A549 (cell line): ENCODE measurements at regions of chr2 and their contacts with region 1.

Region 1: DNA sequence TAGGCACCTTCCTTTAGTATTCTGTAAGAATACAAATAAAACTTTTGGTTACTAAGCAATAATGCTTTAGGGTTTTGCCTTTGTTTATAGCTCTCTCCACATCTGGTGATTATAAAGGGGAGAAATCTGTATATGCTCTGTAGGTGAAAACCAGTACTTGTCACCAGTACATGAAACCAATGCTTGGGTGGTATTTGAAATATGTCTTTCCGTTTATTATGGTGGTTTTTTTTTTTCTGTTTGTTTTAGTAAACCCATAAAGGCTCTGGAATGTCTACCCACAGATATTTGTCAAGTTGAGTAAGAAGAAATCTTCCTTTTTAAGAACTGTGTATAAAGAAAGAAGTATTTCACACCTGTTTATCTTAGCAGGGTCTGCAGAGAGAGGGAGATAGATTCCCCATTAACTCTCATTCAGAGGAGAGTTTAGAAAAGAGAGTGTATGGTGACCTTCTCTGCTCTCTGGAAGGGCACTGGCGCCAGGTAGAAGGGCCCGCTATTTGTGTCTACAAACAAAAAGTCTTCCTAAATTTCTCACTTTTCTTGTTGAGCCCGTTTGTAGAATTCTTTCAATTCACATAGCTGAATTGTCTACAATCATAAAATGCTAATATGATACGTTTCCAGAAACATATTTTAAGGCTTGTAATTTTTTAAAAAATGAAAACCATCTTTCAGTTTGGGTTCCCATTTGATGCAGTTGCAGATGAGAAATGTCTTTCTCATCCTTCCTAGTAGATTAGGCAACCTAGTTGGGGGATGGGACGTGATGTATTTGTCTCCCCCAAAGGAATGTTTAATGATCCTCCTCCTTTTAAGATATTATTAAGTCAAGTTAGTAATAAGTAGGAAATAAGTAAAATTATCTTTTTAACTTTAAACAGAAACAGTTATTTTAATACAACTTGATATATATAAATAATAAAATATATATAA is 33.9 kb downstream of the MAP3K20 start:
- DNase-seq: peak in 1 of 2 experiments; percentile 77
- ATAC-seq: peak; percentile 82 to 89
- H3K4me3 ChIP-seq: peak overlapping the region; percentile 30; the same call in 2 of the 3 replicates
- H3K27ac ChIP-seq: peak overlapping the region; percentile 83 to 86
- H3K4me1 ChIP-seq: peaks cover 44% of the 10 kb centered on the region
- CTCF ChIP-seq: no peak
- EP300 ChIP-seq: peak; percentile 40 to 59; a peak in 4 of 5 replicates
- POLR2A ChIP-seq: no peak
- RAD21 ChIP-seq: peak in 1 of 2 experiments; percentile 29; a peak in 1 of 5 replicates

Region 2: DNA sequence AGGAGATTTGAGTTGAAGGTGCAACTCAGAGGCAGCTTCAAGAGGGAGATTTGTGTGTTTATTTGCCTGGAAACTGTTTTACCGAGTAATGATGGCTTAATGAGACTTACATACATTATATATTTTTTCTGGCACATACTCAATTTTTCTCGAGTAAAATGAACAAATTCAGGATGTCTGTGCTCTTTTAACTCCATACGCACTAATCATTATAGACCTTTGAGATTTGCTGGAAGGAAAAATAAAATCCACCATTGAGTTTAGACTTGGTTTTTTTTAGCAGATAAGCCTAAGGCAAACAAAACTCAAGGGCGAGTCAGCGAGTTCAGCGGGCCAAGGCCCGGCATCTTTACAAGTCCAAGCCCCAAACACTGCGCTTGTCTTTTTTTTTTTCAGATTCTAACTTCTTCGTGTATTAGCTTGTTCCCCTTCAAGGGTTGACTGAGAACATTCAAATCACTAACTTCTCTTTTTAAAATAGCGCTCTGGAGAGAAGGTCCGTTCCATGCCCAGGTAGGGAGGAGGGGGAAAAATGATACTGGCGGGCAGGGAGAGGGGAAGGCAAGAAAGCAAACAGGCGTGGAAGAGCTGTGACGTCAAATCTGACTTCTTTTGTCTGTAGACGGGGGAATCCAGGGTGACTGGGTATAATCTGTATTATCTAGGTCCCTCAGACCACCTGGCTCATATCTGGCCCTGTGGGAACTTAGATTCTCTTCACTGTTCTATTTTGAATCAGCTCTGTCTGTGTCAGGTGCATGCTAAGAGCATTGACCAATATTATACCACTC is 106.6 kb before region 1 on chr2:
- CTCF ChIA-PET with region 1: no interaction called
- POLR2A ChIA-PET with region 1: no interaction called
- DNase-seq: peak; percentile 62 to 97
- ATAC-seq: peak; percentile 95
- H3K4me3 ChIP-seq: peak overlapping the region; percentile 25; the same call in 2 of the 3 replicates
- H3K27ac ChIP-seq: peak overlapping the region; percentile 82 to 87
- H3K4me1 ChIP-seq: peaks cover 52% of the 10 kb centered on the region
- CTCF ChIP-seq: no peak
- EP300 ChIP-seq: peak; percentile 42 to 80; a peak in 3 of 5 replicates
- POLR2A ChIP-seq: no peak
- RAD21 ChIP-seq: no peak

Region 3: DNA sequence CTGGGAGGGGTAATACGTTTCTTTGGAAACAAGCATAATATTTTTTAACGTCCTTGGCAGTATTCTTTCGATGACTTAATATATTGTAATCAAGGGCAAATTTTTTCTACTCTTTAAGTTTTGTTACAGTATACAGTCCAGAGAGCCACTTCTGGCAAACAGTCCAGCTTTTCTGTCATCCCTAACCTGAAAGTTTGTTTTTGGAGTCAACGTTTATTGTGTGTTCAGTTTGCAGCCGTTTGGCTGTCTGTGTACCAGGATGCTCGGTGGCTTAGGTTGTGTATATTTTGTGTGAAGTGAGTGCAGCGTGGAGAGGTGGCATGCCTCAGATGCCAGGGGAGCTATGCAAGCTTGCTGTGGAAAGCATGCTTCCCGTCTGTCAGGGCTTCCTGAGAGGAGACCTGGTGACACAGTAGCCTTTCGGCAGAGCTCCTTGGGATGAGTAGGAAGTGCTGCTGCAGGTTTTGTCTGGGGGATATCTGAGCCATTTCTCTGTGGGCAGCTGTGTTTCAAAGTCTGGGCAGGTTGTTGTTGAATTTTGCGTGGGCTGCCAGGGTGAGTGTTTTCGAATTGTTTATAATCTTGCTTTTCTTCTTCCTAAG is 19.1 kb before region 1 on chr2:
- CTCF ChIA-PET with region 1: interaction called, 10 read pairs
- POLR2A ChIA-PET with region 1: no interaction called
- DNase-seq: peak in 1 of 2 experiments; percentile 52
- ATAC-seq: peak; percentile 64 to 73
- H3K4me3 ChIP-seq: no peak overlapping the region
- H3K27ac ChIP-seq: peak overlapping the region; percentile 44 to 56
- H3K4me1 ChIP-seq: peaks cover 75% of the 10 kb centered on the region
- CTCF ChIP-seq: no peak
- EP300 ChIP-seq: no peak
- POLR2A ChIP-seq: no peak
- RAD21 ChIP-seq: no peak

Region 4: DNA sequence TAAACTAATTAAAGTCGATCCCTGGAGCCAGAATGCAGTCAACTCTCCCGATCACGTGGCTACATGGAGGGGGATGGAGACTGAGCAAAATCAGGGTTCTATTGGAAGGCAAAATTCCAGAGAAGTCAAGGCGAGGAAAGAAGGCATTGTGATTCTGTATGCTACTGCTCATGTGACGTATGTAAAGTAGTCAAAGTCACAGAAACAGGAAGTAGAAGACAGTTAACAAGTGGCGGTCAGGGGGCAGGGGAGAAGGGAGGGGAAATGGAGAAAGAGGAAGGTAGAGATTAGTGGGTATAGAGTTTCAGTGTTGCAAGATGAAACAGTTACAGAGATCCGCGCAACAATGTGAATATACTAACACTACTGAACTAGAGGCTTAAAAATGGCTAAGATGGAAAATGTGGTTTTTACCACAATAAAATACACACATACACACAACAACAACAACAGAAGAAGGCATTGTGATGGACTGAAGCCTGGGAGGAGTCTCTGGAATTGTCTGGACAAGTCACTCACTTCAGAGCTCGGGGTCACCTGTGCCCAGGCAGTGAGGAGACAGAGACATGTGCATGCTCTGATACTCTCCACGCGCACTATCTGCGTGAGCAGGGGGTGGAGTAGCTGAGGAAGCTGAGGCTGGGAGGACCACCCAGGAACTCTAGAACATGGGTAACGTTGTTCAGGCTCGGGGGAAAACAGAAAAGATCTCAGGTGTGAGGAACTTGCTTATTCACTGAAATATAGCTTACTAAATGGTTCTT is 155.3 kb after region 1 on chr2:
- CTCF ChIA-PET with region 1: no interaction called
- POLR2A ChIA-PET with region 1: no interaction called
- DNase-seq: no peak
- ATAC-seq: no peak
- H3K4me3 ChIP-seq: no peak overlapping the region
- H3K27ac ChIP-seq: no peak overlapping the region
- H3K4me1 ChIP-seq: no peaks in the 10 kb centered on the region
- CTCF ChIP-seq: no peak
- EP300 ChIP-seq: no peak
- POLR2A ChIP-seq: no peak
- RAD21 ChIP-seq: no peak